Left cardiac atrium (tissue), 4 donors: ENCODE measurements at regions of chr4 and their contacts with region 1.

Region 1: DNA sequence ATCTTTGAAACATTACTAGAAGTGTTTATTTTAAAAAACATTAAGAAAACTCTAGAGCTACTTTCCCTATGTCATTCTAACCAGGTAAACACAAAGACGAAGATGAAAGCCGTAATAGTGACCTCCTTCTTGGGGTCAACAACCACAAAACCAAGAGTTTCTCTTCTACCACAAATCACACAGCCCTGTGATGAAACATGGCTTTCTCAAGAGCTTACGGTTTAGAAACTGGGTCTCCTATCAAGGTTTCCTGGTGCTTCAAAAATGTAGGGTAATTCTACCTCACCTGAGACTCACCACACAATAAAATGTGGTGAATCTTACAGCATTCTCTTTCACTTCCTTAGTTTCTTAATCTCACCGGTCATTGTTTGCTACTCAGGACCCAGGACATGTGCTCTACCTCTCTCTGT is 50.9 kb downstream of the CORIN start:
- DNase-seq: no peak
- ATAC-seq: no peak

Region 2: GRCh38 chr4:47824840-47825239 is 37.9 kb after region 1 on chr4:
- intact Hi-C with region 1: loop called in 1 of 2 experiments (anchors 5 kb)
- DNase-seq: peak; percentile 55
- ATAC-seq: peak; percentile 83 to 85